ENCODE measurements at regions of chr1 and their contacts with region 1.

Region 1: DNA sequence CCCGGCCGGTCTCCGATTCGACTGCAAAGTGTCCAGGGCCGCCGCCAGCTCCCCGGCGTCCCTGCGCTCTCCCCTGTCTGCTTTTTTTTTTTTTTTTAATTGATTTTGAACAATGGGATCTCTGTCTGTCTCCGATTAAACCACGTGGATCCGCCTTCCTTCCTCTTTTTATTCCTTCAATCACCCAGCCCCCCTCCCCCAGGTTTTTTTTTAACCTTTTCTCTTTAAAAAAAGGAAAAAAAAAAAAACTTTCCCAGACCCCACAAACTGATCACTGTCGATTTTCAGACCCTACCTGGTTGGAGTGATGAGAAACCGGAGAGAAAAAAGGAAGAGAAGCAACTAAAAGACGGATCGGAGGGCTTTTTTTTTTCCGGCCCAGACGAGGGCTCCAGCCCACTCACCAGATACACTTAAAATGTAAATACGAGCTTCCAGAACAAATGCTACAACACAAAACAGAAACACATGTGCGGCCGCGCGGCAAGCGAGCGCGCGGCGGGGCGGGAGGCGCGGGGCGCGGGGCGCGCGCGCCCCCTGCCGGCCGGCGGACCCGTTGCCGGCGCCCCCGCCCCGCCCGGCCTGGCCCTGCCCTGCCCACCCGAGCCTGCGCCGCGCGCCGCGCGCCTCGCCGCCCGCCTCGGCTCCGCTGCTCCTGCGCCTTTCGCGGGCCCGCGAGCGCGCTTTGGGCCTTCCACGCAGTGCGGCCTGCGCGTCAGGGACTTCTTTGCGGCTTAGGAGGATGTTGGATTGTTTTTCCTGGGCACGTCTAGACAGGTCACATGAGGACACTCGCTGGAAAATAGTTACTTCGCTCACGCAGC is at the start of gene RCC2:
- DNase-seq: peak; percentile 86
- ATAC-seq: peak; percentile 69
- H3K4me3 Mint-ChIP-seq: peak within 1 kb of the TSS; percentile 96
- H3K27ac Mint-ChIP-seq: peak within 1 kb of the TSS; percentile 96
- H3K4me1 Mint-ChIP-seq: peaks cover 45% of the 10 kb centered on the region
- H3K27me3 Mint-ChIP-seq: no peaks in the 10 kb centered on the region
- total RNA-seq, gene RCC2: 107 to 120 TPM

Region 2: GRCh38 chr1:16904560-16905111 is 534.8 kb before region 1 on chr1:
- CTCF ChIA-PET with region 1: no interaction called
- POLR2A ChIA-PET with region 1: no interaction called
- intact Hi-C with region 1: loop called in 1 of 2 experiments (anchors 2 kb)
- DNase-seq: peak; percentile 100
- ATAC-seq: peak; percentile 90
- H3K4me3 Mint-ChIP-seq: no peak overlapping the region
- H3K27ac Mint-ChIP-seq: no peak overlapping the region
- H3K4me1 Mint-ChIP-seq: peaks cover 30% of the 10 kb centered on the region
- H3K27me3 Mint-ChIP-seq: no peaks in the 10 kb centered on the region

Region 3: DNA sequence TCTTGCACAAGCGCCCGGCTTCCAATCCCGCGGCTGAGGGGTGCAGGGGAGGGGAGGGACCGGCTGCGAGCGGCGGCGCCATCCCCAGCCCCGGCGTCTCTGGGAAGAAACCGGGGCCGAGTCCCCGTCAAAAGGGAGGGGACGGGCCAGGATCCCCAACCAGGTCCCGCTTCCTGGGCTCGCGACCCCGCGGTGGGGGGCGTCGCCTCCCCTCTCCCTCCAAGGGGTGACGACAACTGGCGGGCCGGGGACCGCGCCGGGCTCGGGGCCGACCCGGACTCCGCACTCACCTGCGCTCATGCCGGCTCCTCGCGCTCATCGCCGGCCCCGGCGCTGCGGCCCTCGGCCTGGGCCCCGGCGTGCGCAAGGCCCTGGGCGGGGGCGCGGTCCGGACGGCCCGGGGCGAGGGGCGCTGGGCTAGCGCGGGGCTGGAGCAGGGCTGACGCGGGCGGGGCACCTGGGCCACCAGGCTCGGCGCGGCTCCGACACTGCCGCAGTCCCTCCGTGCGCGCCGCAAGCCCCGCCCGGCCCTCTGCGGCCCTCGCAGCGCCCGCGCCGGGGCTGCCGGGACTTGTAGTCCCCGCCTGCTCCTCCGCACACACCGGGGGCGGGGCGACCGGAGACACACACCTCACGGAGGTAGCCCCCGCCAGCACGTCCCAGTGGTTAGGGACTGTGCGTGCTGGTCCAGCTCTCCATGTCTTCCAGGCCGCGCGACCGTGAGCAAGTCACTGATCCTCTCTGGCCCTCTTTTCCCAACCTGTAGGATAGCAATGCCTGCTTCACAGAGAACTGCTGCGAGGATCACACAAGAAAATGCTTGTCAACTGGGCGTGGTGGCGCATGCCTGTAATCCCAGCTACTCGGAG is 427.8 kb before region 1 on chr1 and contains the start of gene ATP13A2:
- CTCF ChIA-PET with region 1: no interaction called
- POLR2A ChIA-PET with region 1: no interaction called
- intact Hi-C with region 1: loop called in 1 of 2 experiments (anchors 5 kb)
- DNase-seq: peak; percentile 90
- ATAC-seq: peak; percentile 99
- H3K4me3 Mint-ChIP-seq: peak within 1 kb of the TSS; percentile 79
- H3K27ac Mint-ChIP-seq: peak within 1 kb of the TSS; percentile 55
- H3K4me1 Mint-ChIP-seq: peaks cover 20% of the 10 kb centered on the region
- H3K27me3 Mint-ChIP-seq: no peaks in the 10 kb centered on the region
- total RNA-seq, gene ATP13A2: 30.7 to 32.0 TPM

Region 4: DNA sequence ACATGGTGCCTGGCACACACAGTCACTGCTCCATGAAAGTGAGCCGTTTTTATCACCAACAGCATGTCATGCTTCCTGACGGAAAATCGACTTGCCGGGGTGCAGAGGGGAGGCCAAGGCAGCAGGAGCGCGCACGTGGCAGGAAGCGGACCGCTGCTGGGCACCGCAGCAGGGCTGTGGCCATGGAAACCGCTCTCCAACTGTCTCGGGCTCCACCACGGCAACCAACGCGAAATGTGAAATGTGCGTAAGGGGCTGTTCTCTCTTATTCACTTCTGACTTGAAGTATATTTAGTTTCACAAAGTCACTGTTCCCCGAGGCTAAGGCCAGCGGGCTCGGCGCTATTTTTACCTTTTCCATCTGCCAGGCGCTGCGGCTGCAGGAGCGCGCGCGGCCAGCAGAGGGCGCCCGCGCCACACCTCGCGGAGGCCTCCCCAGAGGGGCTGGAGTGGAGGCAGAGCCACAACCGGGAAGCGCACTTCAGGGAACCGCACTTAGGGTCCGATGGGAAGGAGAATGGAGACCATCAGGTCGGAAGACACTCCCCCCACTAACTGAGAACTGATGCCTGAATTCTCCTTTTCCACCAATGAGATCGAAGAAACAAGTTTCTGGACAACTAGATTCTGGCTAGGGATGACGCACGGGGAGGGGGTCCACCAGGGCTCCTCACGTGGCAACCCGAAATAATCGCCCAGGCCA is 19.7 kb before region 1 on chr1:
- CTCF ChIA-PET with region 1: interaction called, 3 read pairs
- POLR2A ChIA-PET with region 1: no interaction called
- intact Hi-C with region 1: loop called in 1 of 2 experiments (anchors 1 kb)
- DNase-seq: peak; percentile 80
- ATAC-seq: peak; percentile 88
- H3K4me3 Mint-ChIP-seq: no peak overlapping the region
- H3K27ac Mint-ChIP-seq: no peak overlapping the region
- H3K4me1 Mint-ChIP-seq: no peaks in the 10 kb centered on the region
- H3K27me3 Mint-ChIP-seq: no peaks in the 10 kb centered on the region

Region 5: GRCh38 chr1:18949686-18950400 is 1510.4 kb after region 1 on chr1:
- CTCF ChIA-PET with region 1: no interaction called
- POLR2A ChIA-PET with region 1: no interaction called
- intact Hi-C with region 1: loop called in 1 of 2 experiments (anchors 5 kb)
- DNase-seq: peak; percentile 64
- ATAC-seq: no peak
- H3K4me3 Mint-ChIP-seq: peak overlapping the region; percentile 86
- H3K27ac Mint-ChIP-seq: peak overlapping the region; percentile 92
- H3K4me1 Mint-ChIP-seq: peaks cover 93% of the 10 kb centered on the region
- H3K27me3 Mint-ChIP-seq: no peaks in the 10 kb centered on the region